Mammary epithelial cell (primary cell): ENCODE measurements at regions of chr5 and their contacts with region 1.

Region 1: GRCh38 chr5:57097526-57097925 is 76.3 kb upstream of the GPBP1 start:
- DNase-seq: no peak
- H3K4me3 ChIP-seq: no peak overlapping the region
- H3K27ac ChIP-seq: no peak overlapping the region
- H3K4me1 ChIP-seq: peaks cover 8% of the 10 kb centered on the region
- H3K27me3 ChIP-seq: no peaks in the 10 kb centered on the region
- CTCF ChIP-seq: no peak

Region 2: DNA sequence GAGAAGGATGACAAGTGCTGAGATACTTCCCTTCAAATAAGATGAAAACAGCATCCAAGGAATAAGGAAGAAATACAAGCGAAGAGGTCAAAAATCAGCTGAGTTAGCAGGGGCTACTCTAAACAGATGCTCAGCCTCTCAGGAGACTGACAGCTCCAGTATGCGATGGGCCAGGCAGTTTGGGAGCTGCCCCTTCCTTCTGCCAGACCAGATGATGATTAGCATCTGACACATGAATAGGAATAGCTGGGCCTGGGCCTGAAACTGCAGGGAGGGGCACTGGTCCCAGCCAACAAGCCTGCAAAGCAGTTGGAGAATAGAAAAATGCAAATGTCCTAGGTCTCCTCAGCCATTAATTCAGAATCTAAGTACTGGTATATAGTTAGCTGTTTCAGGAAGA is 295.3 kb before region 1 on chr5:
- CTCF ChIA-PET with region 1: no interaction called
- dilution Hi-C with region 1: no loop called
- in situ Hi-C with region 1: no loop called
- intact Hi-C with region 1: no loop called
- DNase-seq: no peak
- H3K4me3 ChIP-seq: no peak overlapping the region
- H3K27ac ChIP-seq: no peak overlapping the region
- H3K4me1 ChIP-seq: no peaks in the 10 kb centered on the region
- H3K27me3 ChIP-seq: no peaks in the 10 kb centered on the region
- CTCF ChIP-seq: no peak

Region 3: DNA sequence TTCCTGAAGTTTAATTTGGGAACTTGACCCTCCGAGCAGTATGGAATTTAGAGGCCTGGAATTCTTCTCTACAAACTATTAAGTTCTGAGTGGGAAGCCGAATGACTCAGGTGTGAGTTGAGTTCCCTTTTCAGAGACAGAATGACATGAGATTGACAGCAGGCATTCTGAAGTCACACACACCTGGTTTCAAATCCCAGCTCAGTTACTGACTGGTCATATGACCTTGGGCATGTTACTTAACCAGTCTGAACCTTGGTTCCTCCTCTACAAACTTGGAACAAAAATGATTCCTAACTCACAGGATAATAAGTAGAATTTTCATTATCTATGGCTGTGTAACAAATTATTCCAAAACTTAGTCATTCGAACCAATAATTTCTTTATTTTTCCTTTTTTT is 30.8 kb after region 1 on chr5:
- CTCF ChIA-PET with region 1: interaction called, 24 read pairs
- dilution Hi-C with region 1: no loop called
- in situ Hi-C with region 1: no loop called
- intact Hi-C with region 1: no loop called
- DNase-seq: no peak
- H3K4me3 ChIP-seq: no peak overlapping the region
- H3K27ac ChIP-seq: no peak overlapping the region
- H3K4me1 ChIP-seq: no peaks in the 10 kb centered on the region
- H3K27me3 ChIP-seq: no peaks in the 10 kb centered on the region
- CTCF ChIP-seq: no peak

Region 4: GRCh38 chr5:57267805-57268204 is 170.3 kb after region 1 on chr5:
- CTCF ChIA-PET with region 1: no interaction called
- dilution Hi-C with region 1: no loop called
- in situ Hi-C with region 1: no loop called
- intact Hi-C with region 1: no loop called
- DNase-seq: no peak
- H3K4me3 ChIP-seq: no peak overlapping the region
- H3K27ac ChIP-seq: no peak overlapping the region
- H3K4me1 ChIP-seq: no peaks in the 10 kb centered on the region
- H3K27me3 ChIP-seq: no peaks in the 10 kb centered on the region
- CTCF ChIP-seq: no peak

Region 5: DNA sequence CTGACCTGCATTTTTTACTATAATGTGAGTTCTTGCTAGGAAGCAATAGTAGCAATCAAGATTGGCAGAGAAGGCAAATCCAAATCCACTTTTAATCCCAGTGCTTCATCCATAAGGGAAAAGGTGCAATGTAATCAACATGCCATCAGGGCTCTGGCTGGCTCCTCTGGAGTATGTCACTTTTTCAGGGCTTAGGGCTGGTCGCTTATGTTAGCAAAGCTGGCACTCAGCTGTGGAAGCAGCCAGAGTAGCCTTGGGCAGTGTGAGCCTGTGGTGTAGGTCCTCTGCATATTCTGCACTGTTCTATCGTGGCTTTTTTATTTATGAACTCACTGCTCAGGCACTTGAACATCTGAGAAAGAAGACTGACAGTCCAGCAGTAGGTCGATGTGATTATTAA is 369.0 kb after region 1 on chr5:
- CTCF ChIA-PET with region 1: no interaction called
- dilution Hi-C with region 1: no loop called
- in situ Hi-C with region 1: no loop called
- intact Hi-C with region 1: no loop called
- DNase-seq: no peak
- H3K4me3 ChIP-seq: no peak overlapping the region
- H3K27ac ChIP-seq: no peak overlapping the region
- H3K4me1 ChIP-seq: no peaks in the 10 kb centered on the region
- H3K27me3 ChIP-seq: no peaks in the 10 kb centered on the region
- CTCF ChIP-seq: no peak